CD8-positive, alpha-beta T cell (primary cell): ENCODE measurements at regions of chr2 and their contacts with region 1.

Region 1: DNA sequence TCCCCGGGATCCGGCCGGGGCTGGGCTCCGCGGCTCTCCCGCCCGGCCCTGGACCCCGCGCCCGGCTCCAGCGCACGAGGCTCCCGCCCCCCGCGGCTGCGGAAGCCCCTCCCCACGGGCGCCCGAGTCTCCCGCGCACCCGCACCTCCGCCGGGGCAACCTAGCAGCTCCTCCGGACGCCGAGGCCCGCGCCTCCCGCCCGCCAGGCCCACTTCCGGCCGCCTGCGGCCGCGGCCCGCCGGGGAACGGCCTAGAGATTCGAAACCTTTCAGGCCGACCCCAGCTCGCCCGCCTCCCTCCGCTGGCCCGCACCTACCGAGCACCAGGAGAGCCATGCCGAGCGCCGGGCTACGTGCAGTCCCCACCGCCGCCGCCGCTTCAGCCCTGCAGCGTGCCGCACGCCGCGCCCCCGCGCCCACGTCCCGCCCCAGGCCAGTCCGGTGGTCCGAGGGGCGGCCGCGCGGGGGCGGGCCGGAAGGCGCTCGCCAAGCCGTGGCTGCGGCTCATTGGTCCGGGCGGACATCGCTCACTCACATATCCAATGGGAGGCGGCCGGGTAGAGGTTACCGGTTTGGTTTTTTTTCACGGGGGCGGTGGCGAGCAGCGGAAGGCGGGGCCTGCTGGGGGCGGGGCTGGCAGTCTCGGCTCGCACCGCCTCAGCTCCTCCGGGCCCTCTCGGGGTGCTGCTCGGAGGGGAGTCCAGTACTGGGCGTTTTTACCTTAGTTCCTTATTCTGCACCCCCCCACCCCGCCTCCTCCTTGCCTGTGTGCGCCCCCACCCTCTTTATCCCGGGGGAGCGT is at the start of gene PDIA6:
- DNase-seq: peak; percentile 89 to 96 (median 93)
- ATAC-seq: peak; percentile 90
- H3K4me3 ChIP-seq: peak within 1 kb of the TSS; percentile 65 to 84
- H3K4me3 Mint-ChIP-seq: peak within 1 kb of the TSS; percentile 91
- H3K27ac ChIP-seq: peak within 1 kb of the TSS; percentile 56 to 73
- H3K27ac Mint-ChIP-seq: peak within 1 kb of the TSS; percentile 86
- H3K4me1 ChIP-seq: peaks cover 27% of the 10 kb centered on the region
- H3K4me1 Mint-ChIP-seq: peaks cover 41% of the 10 kb centered on the region
- H3K27me3 ChIP-seq: no peaks in the 10 kb centered on the region
- H3K27me3 Mint-ChIP-seq: peaks cover 1% of the 10 kb centered on the region
- CTCF ChIP-seq: no peak
- total RNA-seq, gene PDIA6: 24.4 to 24.8 TPM

Region 2: DNA sequence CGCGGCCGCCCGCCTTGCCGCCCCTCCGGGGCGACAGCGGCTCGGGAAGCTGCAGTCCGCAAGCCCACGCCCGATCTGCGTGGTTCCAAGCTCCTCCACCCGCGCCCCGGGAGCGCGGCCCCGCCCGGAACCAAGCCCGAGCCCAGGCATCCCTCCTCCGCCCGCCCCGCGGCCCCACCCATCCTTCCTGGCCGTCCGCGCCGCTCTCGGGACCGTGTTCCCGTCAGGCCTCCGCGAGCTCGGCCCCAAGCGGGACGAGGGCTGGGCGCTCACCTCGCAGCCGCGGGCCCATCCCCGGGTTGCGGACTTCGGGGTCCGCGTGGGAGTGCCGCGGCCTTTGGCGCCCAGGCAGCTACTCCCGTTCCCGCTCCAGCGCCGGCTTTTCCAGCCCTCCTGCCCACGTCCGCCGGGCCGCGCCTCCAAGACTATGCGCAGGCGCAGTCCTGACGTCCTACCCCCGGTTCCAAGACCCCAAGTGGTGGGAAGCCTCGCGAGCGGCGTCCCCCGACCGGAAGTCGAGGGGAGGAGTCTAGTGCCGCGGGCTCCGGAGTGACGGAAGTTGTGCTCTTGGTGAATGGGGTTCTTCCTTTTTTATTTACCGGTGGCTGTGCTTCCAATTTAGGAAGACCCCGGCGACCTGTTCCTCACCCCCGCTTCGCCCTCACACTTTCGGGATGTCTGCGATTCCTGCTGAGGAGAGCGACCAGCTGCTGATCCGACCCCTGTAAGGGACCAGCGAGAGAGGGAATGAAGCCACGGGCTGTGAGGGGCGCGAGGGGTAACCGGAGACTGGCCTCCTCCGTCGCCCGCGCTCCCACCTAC is 1389.3 kb before region 1 on chr2 and contains the starts of genes CPSF3 and ITGB1BP1:
- CTCF ChIA-PET with region 1: no interaction called
- POLR2A ChIA-PET with region 1: no interaction called
- intact Hi-C with region 1: loop called in 1 of 2 experiments (anchors 5 kb)
- DNase-seq: peak; percentile 92 to 99 (median 97)
- ATAC-seq: peak; percentile 86
- H3K4me3 ChIP-seq: peak within 1 kb of the TSS; percentile 93 to 98
- H3K4me3 Mint-ChIP-seq: no peak within 1 kb of the TSS
- H3K27ac ChIP-seq: peak within 1 kb of the TSS; percentile 89 to 90
- H3K27ac Mint-ChIP-seq: peak within 1 kb of the TSS; percentile 89
- H3K4me1 ChIP-seq: peaks cover 22% of the 10 kb centered on the region
- H3K4me1 Mint-ChIP-seq: peaks cover 34% of the 10 kb centered on the region
- H3K27me3 ChIP-seq: no peaks in the 10 kb centered on the region
- H3K27me3 Mint-ChIP-seq: no peaks in the 10 kb centered on the region
- CTCF ChIP-seq: no peak
- total RNA-seq, gene CPSF3: 14.1 to 14.7 TPM
- total RNA-seq, gene ITGB1BP1: 37.2 to 38.8 TPM

Region 3: GRCh38 chr2:9630749-9631483 is 1181.6 kb before region 1 on chr2 and contains the start of gene YWHAQ:
- CTCF ChIA-PET with region 1: no interaction called
- POLR2A ChIA-PET with region 1: no interaction called
- intact Hi-C with region 1: loop called in 1 of 2 experiments (anchors 10 kb)
- DNase-seq: peak; percentile 95 to 100 (median 97)
- ATAC-seq: peak; percentile 90
- H3K4me3 ChIP-seq: peak within 1 kb of the TSS; percentile 90 to 93
- H3K4me3 Mint-ChIP-seq: peak within 1 kb of the TSS; percentile 93
- H3K27ac ChIP-seq: peak within 1 kb of the TSS; percentile 89 to 91
- H3K27ac Mint-ChIP-seq: peak within 1 kb of the TSS; percentile 94
- H3K4me1 ChIP-seq: peaks cover 37% of the 10 kb centered on the region
- H3K4me1 Mint-ChIP-seq: peaks cover 46% of the 10 kb centered on the region
- H3K27me3 ChIP-seq: no peaks in the 10 kb centered on the region
- H3K27me3 Mint-ChIP-seq: no peaks in the 10 kb centered on the region
- CTCF ChIP-seq: no peak
- total RNA-seq, gene YWHAQ: 115 to 123 TPM

Region 4: GRCh38 chr2:10647886-10648605 is 164.5 kb before region 1 on chr2:
- CTCF ChIA-PET with region 1: no interaction called
- POLR2A ChIA-PET with region 1: no interaction called
- intact Hi-C with region 1: no loop called
- DNase-seq: no peak
- ATAC-seq: no peak
- H3K4me3 ChIP-seq: no peak overlapping the region
- H3K4me3 Mint-ChIP-seq: no peak overlapping the region
- H3K27ac ChIP-seq: no peak overlapping the region
- H3K27ac Mint-ChIP-seq: no peak overlapping the region
- H3K4me1 ChIP-seq: no peaks in the 10 kb centered on the region
- H3K4me1 Mint-ChIP-seq: peaks cover 2% of the 10 kb centered on the region
- H3K27me3 ChIP-seq: no peaks in the 10 kb centered on the region
- H3K27me3 Mint-ChIP-seq: no peaks in the 10 kb centered on the region
- CTCF ChIP-seq: no peak

Region 5: GRCh38 chr2:10688921-10689807 is 123.4 kb before region 1 on chr2:
- CTCF ChIA-PET with region 1: no interaction called
- POLR2A ChIA-PET with region 1: interaction called, 3 read pairs
- intact Hi-C with region 1: loop called (anchors 1 to 5 kb)
- DNase-seq: peak in 3 of 9 experiments; percentile 8 to 24 (median 9)
- ATAC-seq: peak; percentile 37
- H3K4me3 ChIP-seq: peak overlapping the region; percentile 96 to 100
- H3K4me3 Mint-ChIP-seq: no peak overlapping the region
- H3K27ac ChIP-seq: peak overlapping the region; percentile 85 to 95
- H3K27ac Mint-ChIP-seq: no peak overlapping the region
- H3K4me1 ChIP-seq: peaks cover 26% of the 10 kb centered on the region
- H3K4me1 Mint-ChIP-seq: peaks cover 9% of the 10 kb centered on the region
- H3K27me3 ChIP-seq: no peaks in the 10 kb centered on the region
- H3K27me3 Mint-ChIP-seq: no peaks in the 10 kb centered on the region
- CTCF ChIP-seq: no peak

Region 6: GRCh38 chr2:10864861-10865636 is 52.5 kb after region 1 on chr2:
- CTCF ChIA-PET with region 1: no interaction called
- POLR2A ChIA-PET with region 1: no interaction called
- intact Hi-C with region 1: no loop called
- DNase-seq: peak in 4 of 9 experiments; percentile 10 to 51 (median 30)
- ATAC-seq: peak; percentile 62
- H3K4me3 ChIP-seq: no peak overlapping the region
- H3K4me3 Mint-ChIP-seq: peak overlapping the region; percentile 17
- H3K27ac ChIP-seq: no peak overlapping the region
- H3K27ac Mint-ChIP-seq: no peak overlapping the region
- H3K4me1 ChIP-seq: peaks cover 4% of the 10 kb centered on the region
- H3K4me1 Mint-ChIP-seq: peaks cover 28% of the 10 kb centered on the region
- H3K27me3 ChIP-seq: no peaks in the 10 kb centered on the region
- H3K27me3 Mint-ChIP-seq: peaks cover 27% of the 10 kb centered on the region
- CTCF ChIP-seq: peak; percentile 24

Region 7: DNA sequence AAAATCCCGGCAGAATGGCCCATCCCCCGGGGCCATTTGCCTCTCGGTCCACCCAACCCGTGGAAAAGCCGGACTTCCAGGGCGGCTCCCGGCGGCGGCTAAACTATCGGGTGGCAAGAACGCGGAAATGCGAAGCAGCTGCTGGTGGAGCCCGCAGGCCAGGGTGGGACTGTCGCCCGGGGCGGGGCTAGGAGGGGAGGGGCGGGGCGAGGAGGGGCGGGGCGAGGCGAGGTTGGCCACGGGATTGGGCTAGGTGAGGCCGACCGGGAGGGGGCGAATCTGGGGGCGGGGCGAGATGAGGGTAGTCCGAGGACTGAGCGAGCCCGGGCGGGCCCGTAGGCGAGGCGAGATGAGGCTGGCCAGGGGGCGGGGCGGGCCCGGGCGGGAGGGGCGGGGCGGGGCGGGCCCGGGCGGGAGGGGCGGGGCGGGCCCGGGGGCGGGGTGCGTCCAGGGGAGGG is 342.4 kb after region 1 on chr2:
- CTCF ChIA-PET with region 1: no interaction called
- POLR2A ChIA-PET with region 1: interaction called, 4 read pairs
- intact Hi-C with region 1: loop called in 1 of 2 experiments (anchors 1 kb)
- DNase-seq: peak; percentile 96 to 99 (median 98)
- ATAC-seq: peak; percentile 91
- H3K4me3 ChIP-seq: peak overlapping the region; percentile 55 to 57
- H3K4me3 Mint-ChIP-seq: peak overlapping the region; percentile 80
- H3K27ac ChIP-seq: peak overlapping the region; percentile 68 to 78
- H3K27ac Mint-ChIP-seq: peak overlapping the region; percentile 85
- H3K4me1 ChIP-seq: peaks cover 18% of the 10 kb centered on the region
- H3K4me1 Mint-ChIP-seq: peaks cover 20% of the 10 kb centered on the region
- H3K27me3 ChIP-seq: no peaks in the 10 kb centered on the region
- H3K27me3 Mint-ChIP-seq: no peaks in the 10 kb centered on the region
- CTCF ChIP-seq: no peak

Region 8: GRCh38 chr2:11465497-11466406 is 653.2 kb after region 1 on chr2 and contains the start of gene E2F6:
- CTCF ChIA-PET with region 1: no interaction called
- POLR2A ChIA-PET with region 1: no interaction called
- intact Hi-C with region 1: loop called (anchors 5 to 10 kb)
- DNase-seq: peak; percentile 68 to 91 (median 81)
- ATAC-seq: peak; percentile 85
- H3K4me3 ChIP-seq: peak within 1 kb of the TSS; percentile 83 to 87
- H3K4me3 Mint-ChIP-seq: peak within 1 kb of the TSS; percentile 96
- H3K27ac ChIP-seq: peak within 1 kb of the TSS; percentile 51 to 70
- H3K27ac Mint-ChIP-seq: peak within 1 kb of the TSS; percentile 91
- H3K4me1 ChIP-seq: peaks cover 13% of the 10 kb centered on the region
- H3K4me1 Mint-ChIP-seq: peaks cover 37% of the 10 kb centered on the region
- H3K27me3 ChIP-seq: no peaks in the 10 kb centered on the region
- H3K27me3 Mint-ChIP-seq: no peaks in the 10 kb centered on the region
- CTCF ChIP-seq: no peak
- total RNA-seq, gene E2F6: 4.9 to 5.0 TPM

Region 9: DNA sequence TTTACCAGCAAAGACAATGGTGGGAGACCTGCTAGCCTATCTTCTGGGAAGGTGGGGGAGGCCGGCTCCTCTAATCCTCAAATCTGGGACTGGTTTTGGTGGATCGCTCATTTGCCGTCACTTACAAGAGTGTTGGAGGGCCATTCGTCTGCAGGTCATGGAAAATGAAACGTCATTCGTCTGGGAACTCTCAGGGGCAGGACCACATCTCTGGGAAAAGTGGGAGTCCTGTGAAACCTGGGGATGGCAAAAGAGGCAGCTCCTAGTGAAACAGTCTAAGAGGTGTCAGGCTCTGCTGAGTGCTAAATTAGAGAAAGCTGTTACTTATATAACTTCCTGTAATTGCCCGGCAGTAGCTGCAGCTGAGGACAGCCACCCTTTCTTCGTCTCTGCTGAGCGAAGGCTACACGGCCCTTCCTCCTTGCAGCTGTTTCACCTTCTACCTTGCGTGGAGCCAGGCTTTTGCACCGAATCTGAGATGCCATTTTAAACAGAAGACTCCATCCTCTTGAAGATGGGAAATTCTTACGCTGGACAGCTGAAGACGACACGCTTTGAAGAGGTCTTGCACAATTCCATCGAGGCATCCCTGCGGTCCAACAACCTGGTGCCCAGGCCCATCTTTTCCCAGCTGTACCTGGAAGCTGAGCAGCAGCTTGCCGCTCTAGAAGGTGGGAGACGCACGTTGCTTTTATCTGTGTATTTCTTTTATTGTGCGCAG is 743.7 kb after region 1 on chr2:
- CTCF ChIA-PET with region 1: no interaction called
- POLR2A ChIA-PET with region 1: no interaction called
- intact Hi-C with region 1: no loop called
- DNase-seq: no peak
- ATAC-seq: no peak
- H3K4me3 ChIP-seq: no peak overlapping the region
- H3K4me3 Mint-ChIP-seq: no peak overlapping the region
- H3K27ac ChIP-seq: no peak overlapping the region
- H3K27ac Mint-ChIP-seq: no peak overlapping the region
- H3K4me1 ChIP-seq: no peaks in the 10 kb centered on the region
- H3K4me1 Mint-ChIP-seq: peaks cover 3% of the 10 kb centered on the region
- H3K27me3 ChIP-seq: no peaks in the 10 kb centered on the region
- H3K27me3 Mint-ChIP-seq: peaks cover 35% of the 10 kb centered on the region
- CTCF ChIP-seq: no peak